Activated CD4-positive, alpha-beta memory T cell treated with anti-CD3 and anti-CD28 coated beads for 36 hours (primary cell): ENCODE measurements at regions of chr17 and their contacts with region 1.

Region 1: GRCh38 chr17:38667099-38667786 is 7.5 kb downstream of the EPOP start:
- DNase-seq: peak; percentile 75
- H3K4me3 Mint-ChIP-seq: no peak overlapping the region
- H3K27ac Mint-ChIP-seq: no peak overlapping the region
- H3K4me1 Mint-ChIP-seq: peaks cover 16% of the 10 kb centered on the region
- H3K27me3 Mint-ChIP-seq: peaks cover 43% of the 10 kb centered on the region

Region 2: DNA sequence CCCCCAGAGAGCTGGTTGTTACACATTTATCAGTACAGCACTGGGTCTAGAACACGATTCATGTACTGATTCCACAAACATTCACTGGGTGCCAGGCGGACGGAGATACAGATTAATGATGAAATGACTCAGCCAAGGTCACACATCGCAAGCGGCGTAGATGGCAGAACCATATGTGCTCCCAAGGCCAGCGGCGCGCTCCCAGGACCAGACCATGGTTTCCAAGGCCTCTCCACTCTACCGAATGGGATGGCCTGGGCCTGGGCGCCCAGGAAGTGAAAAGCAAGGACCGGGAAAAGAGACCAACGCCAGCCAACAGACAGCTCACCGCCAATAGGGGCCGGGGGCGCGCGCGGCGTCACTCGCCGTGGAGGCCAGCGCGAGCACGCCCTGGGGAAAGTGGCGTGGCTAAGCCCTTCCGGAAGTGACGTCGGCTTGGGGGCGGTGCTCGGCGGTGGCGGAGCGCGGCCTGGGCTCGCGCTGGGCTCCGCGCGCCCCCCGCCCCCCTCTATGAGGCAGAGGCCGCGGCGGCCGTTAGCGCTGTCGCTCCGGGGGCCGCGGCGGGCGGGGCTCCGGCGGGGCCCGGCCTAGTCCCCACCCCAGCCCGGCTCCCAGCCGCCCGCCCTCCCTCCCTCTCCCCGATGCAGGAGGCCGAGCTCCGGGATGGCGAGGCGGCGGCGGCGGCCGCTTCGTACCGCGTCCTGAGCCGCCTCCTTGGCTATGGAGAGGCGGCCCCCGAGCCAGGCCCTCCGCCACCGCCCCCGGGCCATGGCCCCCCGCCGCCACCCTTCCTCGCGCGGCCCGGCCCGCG is 315.6 kb before region 1 on chr17 and contains the start of gene SOCS7:
- CTCF ChIA-PET with region 1: interaction called, 14 read pairs
- POLR2A ChIA-PET with region 1: no interaction called
- intact Hi-C with region 1: no loop called
- DNase-seq: peak; percentile 93
- H3K4me3 Mint-ChIP-seq: peak within 1 kb of the TSS; percentile 94
- H3K27ac Mint-ChIP-seq: peak within 1 kb of the TSS; percentile 90
- H3K4me1 Mint-ChIP-seq: peaks cover 50% of the 10 kb centered on the region
- H3K27me3 Mint-ChIP-seq: no peaks in the 10 kb centered on the region
- total RNA-seq, gene SOCS7: 18.1 to 21.7 TPM

Region 3: DNA sequence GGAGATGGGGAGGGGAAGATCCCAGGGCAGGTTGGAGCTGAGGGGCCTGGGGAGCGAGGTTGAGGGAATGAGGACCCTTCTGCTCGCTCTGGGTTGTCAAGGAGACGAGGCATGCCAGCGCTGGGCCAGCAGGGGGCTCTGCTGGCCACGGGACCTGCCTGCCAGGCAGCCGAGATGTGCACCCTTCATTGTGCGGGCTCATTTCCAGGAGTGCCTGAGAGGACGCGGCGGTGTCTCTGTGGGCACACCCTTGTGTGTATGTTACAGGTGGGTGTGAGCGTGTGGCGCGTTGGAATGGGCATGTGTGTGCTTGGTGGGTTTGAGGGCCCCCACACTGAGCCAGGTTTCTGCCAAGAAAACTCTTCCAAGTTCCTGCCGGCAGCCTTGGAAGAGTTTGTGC is 223.1 kb before region 1 on chr17:
- CTCF ChIA-PET with region 1: interaction called, 4 read pairs
- POLR2A ChIA-PET with region 1: no interaction called
- intact Hi-C with region 1: loop called (anchors 5 kb)
- DNase-seq: peak; percentile 69
- H3K4me3 Mint-ChIP-seq: no peak overlapping the region
- H3K27ac Mint-ChIP-seq: no peak overlapping the region
- H3K4me1 Mint-ChIP-seq: peaks cover 5% of the 10 kb centered on the region
- H3K27me3 Mint-ChIP-seq: peaks cover 10% of the 10 kb centered on the region

Region 4: DNA sequence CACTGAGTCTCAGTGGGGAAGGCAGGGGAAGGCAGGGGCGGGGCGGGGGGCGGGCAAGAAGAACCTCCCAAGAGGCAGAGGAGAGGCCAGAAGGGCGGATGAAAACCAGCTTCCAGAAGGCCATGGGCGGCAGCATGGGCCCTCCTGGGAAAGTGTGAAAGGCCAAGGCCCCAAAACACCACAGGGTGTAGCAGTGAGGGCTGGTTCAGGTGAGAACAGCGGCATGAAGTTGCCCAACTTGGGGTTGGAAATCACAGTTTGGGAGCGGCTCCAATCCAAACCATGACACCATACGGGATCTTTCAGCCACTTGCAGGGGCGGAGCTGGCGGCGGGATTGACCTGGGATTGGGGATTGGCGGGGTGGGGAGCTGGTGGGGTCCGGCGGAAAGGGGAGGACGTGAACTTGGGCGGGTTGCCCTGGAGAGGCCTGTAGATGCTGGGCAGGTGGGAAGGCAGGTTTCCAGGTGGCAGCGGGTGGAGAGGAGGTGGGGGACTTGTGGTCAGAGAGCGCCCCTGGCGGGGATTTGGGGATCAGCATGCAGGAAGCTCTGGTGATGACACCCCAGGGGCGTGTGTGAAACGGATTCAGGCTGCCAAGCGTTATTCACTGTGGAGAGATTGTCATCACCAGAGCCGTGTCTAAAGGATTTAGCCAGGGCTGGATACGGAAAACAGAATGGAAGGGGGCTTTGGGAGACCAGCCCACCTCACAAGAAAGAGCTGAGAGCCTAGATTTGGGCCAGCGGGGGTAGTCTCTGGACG is 158.1 kb before region 1 on chr17:
- CTCF ChIA-PET with region 1: interaction called, 10 read pairs
- POLR2A ChIA-PET with region 1: no interaction called
- intact Hi-C with region 1: no loop called
- DNase-seq: peak; percentile 87
- H3K4me3 Mint-ChIP-seq: peak overlapping the region; percentile 71
- H3K27ac Mint-ChIP-seq: no peak overlapping the region
- H3K4me1 Mint-ChIP-seq: peaks cover 9% of the 10 kb centered on the region
- H3K27me3 Mint-ChIP-seq: peaks cover 39% of the 10 kb centered on the region

Region 5: DNA sequence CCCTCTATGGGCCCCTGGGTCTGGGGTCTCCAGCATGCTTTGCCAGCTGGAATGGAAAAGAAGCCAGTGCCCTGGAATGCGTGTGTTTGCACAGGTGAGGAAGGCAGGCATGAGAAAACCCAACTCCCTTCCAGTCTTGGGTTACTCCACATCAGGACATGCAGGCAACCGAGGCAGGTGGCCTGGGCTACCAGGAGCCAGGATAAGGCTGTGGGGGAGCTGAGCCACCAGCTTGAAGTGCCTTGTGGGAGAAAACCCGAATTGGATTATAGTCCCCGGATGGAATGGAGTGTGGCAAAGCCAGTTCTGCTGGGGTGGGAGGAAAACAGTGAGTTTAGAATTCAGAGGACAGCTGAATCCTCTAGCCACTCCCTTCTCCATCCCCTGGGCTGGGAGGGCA is 68.7 kb before region 1 on chr17:
- CTCF ChIA-PET with region 1: interaction called, 21 read pairs
- POLR2A ChIA-PET with region 1: interaction called, 3 read pairs
- intact Hi-C with region 1: no loop called
- DNase-seq: peak; percentile 40
- H3K4me3 Mint-ChIP-seq: no peak overlapping the region
- H3K27ac Mint-ChIP-seq: no peak overlapping the region
- H3K4me1 Mint-ChIP-seq: no peaks in the 10 kb centered on the region
- H3K27me3 Mint-ChIP-seq: peaks cover 60% of the 10 kb centered on the region

Region 6: GRCh38 chr17:38656959-38657823 is 10.1 kb before region 1 on chr17:
- CTCF ChIA-PET with region 1: interaction called, 49 read pairs
- POLR2A ChIA-PET with region 1: no interaction called
- intact Hi-C with region 1: no loop called
- DNase-seq: no peak
- H3K4me3 Mint-ChIP-seq: no peak overlapping the region
- H3K27ac Mint-ChIP-seq: no peak overlapping the region
- H3K4me1 Mint-ChIP-seq: peaks cover 11% of the 10 kb centered on the region
- H3K27me3 Mint-ChIP-seq: peaks cover 11% of the 10 kb centered on the region